Activated naive CD8-positive, alpha-beta T cell treated with anti-CD3 and anti-CD28 coated beads, Interleukin-2, amount 10 ng/mL, durations not matched to agents 7 days and 5 days (primary cell): ENCODE measurements at regions of chr19 and their contacts with region 1.

Region 1: GRCh38 chr19:11090054-11090900 is 1.0 kb downstream of the LDLR start:
- DNase-seq: peak; percentile 94
- ATAC-seq: peak; percentile 87
- H3K4me3 Mint-ChIP-seq: peak overlapping the region; percentile 94
- H3K27ac Mint-ChIP-seq: peak overlapping the region; percentile 99
- H3K4me1 Mint-ChIP-seq: peaks cover 34% of the 10 kb centered on the region
- H3K27me3 Mint-ChIP-seq: no peaks in the 10 kb centered on the region

Region 2: DNA sequence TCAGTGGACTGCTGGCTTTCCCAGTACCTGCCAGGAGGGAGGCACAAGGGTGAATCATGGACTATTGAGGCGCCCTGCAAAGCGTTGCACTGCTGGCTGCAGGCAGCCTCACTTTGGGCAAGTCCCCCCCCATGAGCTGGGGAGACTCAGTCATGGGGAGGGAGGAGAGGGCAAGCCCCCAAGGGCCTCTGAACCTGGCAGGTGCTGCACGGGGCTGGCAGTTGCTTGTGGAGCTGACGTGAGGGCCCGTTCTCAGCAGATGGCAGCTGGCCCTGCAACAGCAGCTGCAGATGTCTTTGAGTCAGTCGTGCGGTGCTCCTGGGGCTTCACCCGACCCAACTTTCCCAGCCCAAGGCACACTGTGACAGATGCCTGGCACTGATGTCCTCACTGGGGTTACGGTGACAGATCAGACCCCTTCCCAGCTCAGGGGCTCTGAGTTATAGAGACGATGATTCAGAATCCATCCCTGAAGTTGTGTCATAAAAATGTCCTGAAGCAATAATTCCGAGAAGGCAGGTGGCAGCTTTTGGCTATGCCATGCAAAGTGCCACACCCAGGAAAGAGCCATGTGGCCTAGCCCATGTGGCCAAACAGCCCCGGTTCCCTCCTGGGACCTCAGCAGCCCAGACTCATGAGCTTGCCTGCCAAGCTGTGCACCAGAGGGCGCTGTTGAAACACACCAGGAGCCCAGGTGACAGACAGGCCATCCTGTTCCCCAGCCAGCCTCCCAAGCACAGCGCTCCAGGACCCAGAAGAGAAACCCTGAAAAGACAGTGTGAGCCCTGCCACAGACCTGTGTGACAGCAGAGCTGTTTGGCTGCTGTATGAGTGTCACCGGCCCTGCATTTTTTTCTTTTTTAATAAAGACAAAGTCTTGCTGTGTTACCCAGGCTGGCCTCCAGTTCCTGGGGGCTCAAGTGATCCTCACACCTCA is 54.6 kb before region 1 on chr19:
- POLR2A ChIA-PET with region 1: interaction called, 14 read pairs
- DNase-seq: peak; percentile 86
- ATAC-seq: peak; percentile 98
- H3K4me3 Mint-ChIP-seq: no peak overlapping the region
- H3K27ac Mint-ChIP-seq: peak overlapping the region; percentile 12
- H3K4me1 Mint-ChIP-seq: peaks cover 3% of the 10 kb centered on the region
- H3K27me3 Mint-ChIP-seq: no peaks in the 10 kb centered on the region

Region 3: GRCh38 chr19:11155373-11156120 is 65.3 kb after region 1 on chr19 and contains the start of gene SPC24:
- POLR2A ChIA-PET with region 1: interaction called, 13 read pairs
- DNase-seq: peak; percentile 89
- ATAC-seq: peak; percentile 100
- H3K4me3 Mint-ChIP-seq: peak within 1 kb of the TSS; percentile 92
- H3K27ac Mint-ChIP-seq: peak within 1 kb of the TSS; percentile 93
- H3K4me1 Mint-ChIP-seq: peaks cover 18% of the 10 kb centered on the region
- H3K27me3 Mint-ChIP-seq: peaks cover 2% of the 10 kb centered on the region
- total RNA-seq, gene SPC24: 63.0 to 65.4 TPM

Region 4: DNA sequence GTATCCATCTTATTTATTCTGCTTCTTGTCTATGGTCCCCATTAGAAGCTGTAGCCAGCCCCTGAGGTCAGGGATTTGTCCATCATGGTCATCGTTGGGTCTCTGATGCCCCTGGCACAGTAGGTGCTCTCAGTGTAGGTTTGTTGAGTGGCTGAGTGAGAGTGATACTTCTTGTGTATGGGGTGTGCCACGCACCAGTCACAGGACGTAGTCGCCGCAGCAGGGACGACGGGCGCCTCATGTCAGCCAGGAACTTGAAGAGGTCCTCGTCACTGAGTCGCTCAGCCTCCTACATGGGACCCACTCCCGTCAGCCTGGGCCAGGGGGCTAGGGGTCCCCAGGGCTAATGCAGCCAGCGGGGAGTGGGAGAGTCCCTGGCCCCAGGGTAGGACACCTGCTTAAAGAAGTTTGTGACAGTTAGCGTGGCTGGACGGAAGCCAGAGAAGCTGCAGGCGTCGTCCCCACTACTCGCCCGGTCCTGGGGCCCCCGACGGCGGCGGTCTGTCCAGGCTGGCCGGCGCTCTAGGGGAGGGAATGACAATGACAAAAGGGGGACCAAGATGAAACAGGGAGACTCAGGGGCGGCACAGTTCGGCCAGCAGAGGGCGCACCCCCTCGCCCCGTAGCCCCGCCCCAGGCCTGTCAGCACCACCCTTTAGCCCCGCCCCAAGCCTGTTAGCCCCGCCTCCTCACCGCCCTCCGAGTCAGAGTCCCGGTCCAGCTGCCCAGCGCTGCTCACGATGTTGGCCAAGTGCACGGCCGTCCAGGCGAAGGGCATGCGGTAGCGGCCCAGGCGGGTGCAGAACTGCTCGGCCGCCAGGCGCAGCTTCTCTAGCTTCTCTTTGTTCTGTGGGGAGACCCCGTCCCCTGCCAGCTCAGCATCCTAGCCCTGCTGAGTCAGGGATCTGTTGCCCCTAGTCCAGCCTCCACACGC is 152.9 kb after region 1 on chr19:
- POLR2A ChIA-PET with region 1: no interaction called
- DNase-seq: peak; percentile 90
- ATAC-seq: peak; percentile 87
- H3K4me3 Mint-ChIP-seq: peak overlapping the region; percentile 49
- H3K27ac Mint-ChIP-seq: no peak overlapping the region
- H3K4me1 Mint-ChIP-seq: peaks cover 3% of the 10 kb centered on the region
- H3K27me3 Mint-ChIP-seq: peaks cover 8% of the 10 kb centered on the region